ENCODE measurements at regions of chr19 and their contacts with region 1.

Region 1: DNA sequence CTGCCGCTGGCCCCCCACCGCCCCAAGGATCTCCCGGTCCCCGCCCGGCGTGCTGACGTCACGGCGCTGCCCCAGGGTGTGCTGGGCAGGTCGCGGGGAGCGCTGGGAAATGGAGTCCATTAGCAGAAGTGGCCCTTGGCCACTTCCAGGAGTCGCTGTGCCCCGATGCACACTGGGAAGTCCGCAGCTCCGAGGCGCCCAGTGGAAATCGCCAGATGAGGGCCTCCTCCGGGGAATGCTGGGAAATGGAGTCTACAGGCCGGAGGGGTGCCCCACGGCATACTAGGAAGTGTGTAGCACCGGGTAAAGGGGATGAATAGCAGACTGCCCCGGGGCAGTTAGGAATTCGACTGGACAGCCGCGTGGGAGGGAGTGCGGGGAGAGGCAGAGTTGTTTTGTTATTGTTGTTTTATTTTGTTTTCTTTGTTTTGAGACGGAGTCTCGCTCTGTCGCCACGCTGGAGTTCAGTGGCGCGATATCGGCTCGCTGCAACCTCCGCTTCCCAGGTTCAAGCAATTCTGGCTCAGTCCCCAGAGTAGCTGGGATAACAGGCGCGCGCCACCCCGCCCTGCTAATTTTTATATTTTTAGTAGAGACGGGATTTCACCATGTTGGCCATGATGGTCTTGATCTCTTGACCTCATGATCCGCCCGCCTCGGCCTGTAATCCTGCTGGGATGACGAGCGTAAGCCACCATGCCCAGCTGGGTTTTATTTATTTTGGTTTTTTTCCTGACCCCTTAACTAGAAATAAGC is at the start of gene PPP1R12C:
- DNase-seq: peak; percentile 96
- H3K4me3 Mint-ChIP-seq: peak within 1 kb of the TSS; percentile 98
- H3K27ac Mint-ChIP-seq: peak within 1 kb of the TSS; percentile 95
- H3K4me1 Mint-ChIP-seq: peaks cover 28% of the 10 kb centered on the region
- H3K27me3 Mint-ChIP-seq: peaks cover 4% of the 10 kb centered on the region
- total RNA-seq, gene PPP1R12C: 114 and 115 TPM in 2 replicates

Region 2: DNA sequence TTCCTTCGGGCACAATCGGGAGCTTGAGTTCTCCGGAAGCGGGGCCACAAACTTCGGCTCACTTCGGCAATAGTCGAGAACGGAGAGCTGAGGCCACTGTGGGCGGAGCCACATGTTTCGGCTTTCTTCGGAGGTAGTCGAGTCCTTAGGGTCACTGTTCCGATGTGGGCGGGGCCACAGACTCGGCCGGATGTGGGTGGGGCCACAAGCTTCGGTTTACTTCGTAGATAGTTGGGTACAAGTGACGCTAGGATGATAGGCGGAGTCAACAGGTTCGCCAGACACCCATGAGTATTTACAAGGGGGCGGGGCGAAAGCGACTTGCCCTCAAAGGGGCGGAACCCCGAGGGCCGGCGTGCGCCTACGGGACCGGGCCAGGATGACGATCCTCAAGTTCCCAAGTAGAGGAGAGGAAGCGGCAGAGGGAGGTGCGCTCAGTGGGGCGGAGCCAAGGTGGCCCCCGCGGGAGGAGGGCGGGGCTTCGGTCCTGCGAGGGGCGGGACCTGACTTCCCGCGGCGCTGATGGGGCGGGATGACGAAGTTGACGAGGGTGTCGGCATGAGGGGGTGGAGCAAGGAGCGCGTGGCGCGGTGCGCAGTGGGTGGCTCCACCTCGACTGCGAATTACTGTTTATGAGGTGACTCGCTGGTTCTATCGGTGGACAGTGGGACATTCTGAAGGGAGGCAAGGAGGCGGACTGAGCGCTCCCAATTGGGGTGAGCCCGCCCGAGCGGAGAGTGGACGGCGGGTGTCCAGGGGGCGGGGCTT is 927.9 kb before region 1 on chr19:
- intact Hi-C with region 1: loop called (anchors 1 kb)
- DNase-seq: peak; percentile 100
- H3K4me3 Mint-ChIP-seq: peak overlapping the region; percentile 94
- H3K27ac Mint-ChIP-seq: peak overlapping the region; percentile 100
- H3K4me1 Mint-ChIP-seq: peaks cover 31% of the 10 kb centered on the region
- H3K27me3 Mint-ChIP-seq: no peaks in the 10 kb centered on the region

Region 3: GRCh38 chr19:55018216-55018615 is 99.6 kb before region 1 on chr19:
- intact Hi-C with region 1: no loop called
- DNase-seq: no peak
- H3K4me3 Mint-ChIP-seq: no peak overlapping the region
- H3K27ac Mint-ChIP-seq: no peak overlapping the region
- H3K4me1 Mint-ChIP-seq: no peaks in the 10 kb centered on the region
- H3K27me3 Mint-ChIP-seq: no peaks in the 10 kb centered on the region

Region 4: DNA sequence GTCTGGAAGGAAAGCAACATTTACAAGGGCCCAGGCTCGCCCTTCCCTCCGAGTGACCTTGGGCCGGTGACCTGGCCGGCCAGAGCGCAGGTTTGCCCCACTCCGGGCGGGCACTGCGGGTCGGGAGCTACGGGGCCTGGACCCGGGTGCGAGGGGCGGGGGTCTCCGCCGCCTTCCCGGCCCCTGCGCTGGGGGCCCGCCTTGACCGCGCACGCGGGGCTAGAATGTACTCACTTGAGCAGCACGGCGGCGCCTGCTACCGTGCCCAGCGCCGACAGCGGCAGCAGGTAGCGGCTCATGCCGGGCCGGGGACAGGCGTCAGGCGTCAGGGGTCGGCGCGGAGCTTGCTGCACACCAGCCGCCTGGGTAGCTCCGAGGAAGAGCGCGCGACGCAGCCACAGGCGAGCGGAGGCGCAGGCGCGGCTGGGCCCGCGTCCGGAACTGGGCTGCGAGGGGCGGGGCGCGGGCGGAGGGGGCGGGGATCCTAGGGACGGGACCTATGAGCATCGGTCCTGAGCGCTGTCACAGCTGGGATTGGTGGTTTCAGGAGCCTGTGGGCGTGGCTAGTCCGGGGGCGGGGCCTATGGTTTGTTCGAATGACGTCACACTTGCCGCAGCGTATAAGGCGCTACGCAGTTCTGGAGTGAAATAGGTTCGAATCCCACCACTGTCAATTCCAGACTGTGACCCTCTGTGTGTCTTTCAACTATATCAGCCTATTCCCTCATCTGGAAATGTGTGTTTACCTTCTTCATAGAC is 54.9 kb before region 1 on chr19 and contains the start of gene RDH13:
- intact Hi-C with region 1: loop called (anchors 1 kb)
- DNase-seq: peak; percentile 96
- H3K4me3 Mint-ChIP-seq: peak within 1 kb of the TSS; percentile 89
- H3K27ac Mint-ChIP-seq: peak within 1 kb of the TSS; percentile 75
- H3K4me1 Mint-ChIP-seq: peaks cover 12% of the 10 kb centered on the region
- H3K27me3 Mint-ChIP-seq: peaks cover 18% of the 10 kb centered on the region
- total RNA-seq, gene RDH13: 21.7 and 26.4 TPM in 2 replicates

Region 5: DNA sequence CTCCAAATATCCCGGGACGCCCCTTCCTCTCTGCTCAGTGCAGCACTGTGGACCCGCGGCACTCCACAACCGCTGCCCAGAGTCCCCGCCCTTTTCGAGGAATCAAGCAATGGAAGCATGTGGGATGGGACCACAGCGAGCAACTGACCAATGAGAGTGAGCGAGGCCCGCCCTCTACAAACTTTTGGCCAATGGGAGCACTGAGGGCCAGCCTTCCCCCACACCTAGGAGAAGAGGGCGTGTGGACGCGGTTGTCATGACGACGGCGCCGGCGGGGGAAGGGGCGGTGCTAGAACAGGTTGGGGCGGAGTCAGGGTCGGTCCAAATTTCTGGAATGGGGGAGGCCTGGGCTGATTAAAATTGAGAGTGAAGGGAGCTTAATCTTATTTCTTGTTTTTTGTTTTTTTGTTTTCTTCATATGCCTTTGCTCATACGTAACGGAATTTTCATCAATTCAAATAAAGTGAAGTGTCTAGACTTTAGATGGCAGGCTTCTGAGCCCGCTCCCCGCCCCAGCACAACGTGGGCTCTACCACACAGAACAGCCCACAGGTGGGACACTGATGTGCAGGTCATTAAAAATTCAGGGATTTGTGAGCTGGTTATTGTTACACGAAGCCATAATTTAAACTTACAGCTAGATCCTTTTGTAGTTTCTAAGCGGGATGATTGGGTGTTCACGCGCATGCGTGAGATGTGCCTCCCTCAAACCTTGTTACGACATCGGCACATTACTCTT is 48.9 kb after region 1 on chr19 and contains the start of gene DNAAF3:
- intact Hi-C with region 1: loop called (anchors 2 kb)
- DNase-seq: peak; percentile 76
- H3K4me3 Mint-ChIP-seq: peak within 1 kb of the TSS; percentile 84
- H3K27ac Mint-ChIP-seq: peak within 1 kb of the TSS; percentile 32
- H3K4me1 Mint-ChIP-seq: peaks cover 12% of the 10 kb centered on the region
- H3K27me3 Mint-ChIP-seq: peaks cover 57% of the 10 kb centered on the region
- total RNA-seq, gene DNAAF3: 0.36 TPM in 1 of 2 replicates, not detected in the other

Region 6: DNA sequence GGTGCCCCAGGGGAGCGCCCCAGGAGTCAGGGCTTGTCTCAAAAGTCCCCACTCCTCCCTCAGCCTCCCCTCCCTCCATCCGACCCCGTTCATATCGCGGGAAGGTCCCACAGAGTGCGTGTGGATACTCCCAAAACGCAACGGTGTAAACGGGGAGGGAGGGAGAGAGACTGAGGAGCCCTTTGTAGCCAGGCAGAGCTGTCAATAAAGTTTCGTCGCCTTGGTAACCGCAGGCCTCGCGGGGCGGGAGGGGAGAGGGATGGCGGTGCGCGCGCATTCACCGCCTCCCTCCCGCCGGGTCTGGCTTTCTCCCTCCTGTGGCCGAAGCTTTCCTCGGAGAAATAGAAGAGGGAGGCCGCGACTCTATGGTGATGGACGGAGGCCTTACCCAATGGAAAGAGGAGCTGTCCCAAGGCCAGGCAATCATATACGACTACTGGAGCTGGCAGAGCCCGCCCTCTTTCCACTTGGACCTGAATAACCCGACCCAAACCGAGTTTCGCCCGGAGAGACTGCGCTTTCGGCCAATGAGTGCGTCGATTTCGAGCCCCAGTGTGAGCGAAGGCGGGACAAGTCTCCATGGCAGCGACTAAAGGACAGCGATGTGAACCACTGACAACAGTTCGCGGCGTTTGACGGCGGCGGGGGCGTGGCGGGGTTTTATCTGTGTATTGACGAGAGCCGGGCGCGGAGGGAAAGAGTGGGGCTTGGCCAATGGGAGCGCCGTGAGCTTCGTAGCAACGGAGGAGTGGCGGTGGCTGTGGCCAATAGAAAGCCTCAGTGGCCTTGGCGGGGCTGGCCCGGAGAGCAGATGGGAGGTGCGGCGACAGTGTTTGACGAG is 221.5 kb after region 1 on chr19 and contains the start of gene KMT5C:
- intact Hi-C with region 1: loop called (anchors 1 kb)
- DNase-seq: peak; percentile 100
- H3K4me3 Mint-ChIP-seq: peak within 1 kb of the TSS; percentile 96
- H3K27ac Mint-ChIP-seq: peak within 1 kb of the TSS; percentile 99
- H3K4me1 Mint-ChIP-seq: peaks cover 14% of the 10 kb centered on the region
- H3K27me3 Mint-ChIP-seq: peaks cover 9% of the 10 kb centered on the region
- total RNA-seq, gene KMT5C: 29.1 and 29.9 TPM in 2 replicates

Region 7: GRCh38 chr19:55599468-55600279 is 481.9 kb after region 1 on chr19 and contains the start of gene FIZ1:
- intact Hi-C with region 1: loop called (anchors 1 kb)
- DNase-seq: peak; percentile 95
- H3K4me3 Mint-ChIP-seq: peak within 1 kb of the TSS; percentile 93
- H3K27ac Mint-ChIP-seq: peak within 1 kb of the TSS; percentile 98
- H3K4me1 Mint-ChIP-seq: peaks cover 28% of the 10 kb centered on the region
- H3K27me3 Mint-ChIP-seq: no peaks in the 10 kb centered on the region
- total RNA-seq, gene FIZ1: 24.2 and 24.7 TPM in 2 replicates

Region 8: GRCh38 chr19:56140583-56141416 is 1023.0 kb after region 1 on chr19 and contains the start of gene ZNF444:
- intact Hi-C with region 1: loop called (anchors 1 kb)
- DNase-seq: peak; percentile 99
- H3K4me3 Mint-ChIP-seq: peak within 1 kb of the TSS; percentile 82
- H3K27ac Mint-ChIP-seq: peak within 1 kb of the TSS; percentile 84
- H3K4me1 Mint-ChIP-seq: peaks cover 37% of the 10 kb centered on the region
- H3K27me3 Mint-ChIP-seq: no peaks in the 10 kb centered on the region
- total RNA-seq, gene ZNF444: 33.8 and 36.5 TPM in 2 replicates

Measured in activated T-helper 1 cell treated with anti-CD3 and anti-CD28 coated beads, Interleukin-12 subunit alpha, Interleukin-12 subunit beta, Interleukin-2, Interleukin-4 antibody, amounts not matched to agents 30 ng/mL and 10 ng/mL and 1 ng/mL, durations not matched to agents 14 hours and 24 hours and 36 hours (primary cell).